Activated naive CD4-positive, alpha-beta T cell treated with anti-CD3 and anti-CD28 coated beads for 36 hours (primary cell): ENCODE measurements at regions of chr1 and their contacts with region 1.

Region 1: GRCh38 chr1:15835741-15836510 is 11.6 kb upstream of the SPEN start:
- DNase-seq: peak; percentile 100
- H3K4me3 Mint-ChIP-seq: peak overlapping the region; percentile 86
- H3K27ac Mint-ChIP-seq: peak overlapping the region; percentile 95
- H3K4me1 Mint-ChIP-seq: peaks cover 27% of the 10 kb centered on the region
- H3K27me3 Mint-ChIP-seq: no peaks in the 10 kb centered on the region

Region 2: GRCh38 chr1:15246960-15247614 is 588.8 kb before region 1 on chr1 and contains the start of gene FHAD1:
- CTCF ChIA-PET with region 1: no interaction called
- intact Hi-C with region 1: loop called (anchors 10 kb)
- DNase-seq: peak; percentile 48
- H3K4me3 Mint-ChIP-seq: peak within 1 kb of the TSS; percentile 51
- H3K27ac Mint-ChIP-seq: peak within 1 kb of the TSS; percentile 59
- H3K4me1 Mint-ChIP-seq: peaks cover 66% of the 10 kb centered on the region
- H3K27me3 Mint-ChIP-seq: peaks cover 50% of the 10 kb centered on the region
- total RNA-seq, gene FHAD1: 0.45 TPM in 1 of 2 experiments, not detected in the other

Region 3: DNA sequence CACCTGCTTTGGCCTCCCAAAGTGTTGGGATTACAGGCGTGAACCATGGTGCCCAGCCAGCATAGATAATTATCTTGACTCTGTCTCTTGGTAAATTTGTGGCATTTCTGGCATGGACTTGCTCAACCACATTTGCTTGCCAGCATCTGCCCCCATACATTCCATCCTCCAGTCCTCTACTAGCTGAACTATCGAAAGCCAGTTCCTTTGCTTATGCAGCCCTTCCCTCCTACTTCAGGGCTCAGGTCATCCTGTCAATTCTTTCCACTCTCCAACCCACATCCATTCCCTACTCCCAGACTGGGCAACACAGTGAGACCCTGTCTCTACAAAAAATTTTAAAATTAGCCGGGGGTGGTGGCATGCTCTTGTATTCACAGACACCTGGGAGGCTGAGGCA is 15.4 kb before region 1 on chr1:
- CTCF ChIA-PET with region 1: interaction called, 18 read pairs
- intact Hi-C with region 1: no loop called
- DNase-seq: no peak
- H3K4me3 Mint-ChIP-seq: no peak overlapping the region
- H3K27ac Mint-ChIP-seq: no peak overlapping the region
- H3K4me1 Mint-ChIP-seq: peaks cover 5% of the 10 kb centered on the region
- H3K27me3 Mint-ChIP-seq: no peaks in the 10 kb centered on the region

Region 4: GRCh38 chr1:15870421-15870820 is 34.5 kb after region 1 on chr1:
- CTCF ChIA-PET with region 1: no interaction called
- intact Hi-C with region 1: loop called (anchors 5 kb)
- DNase-seq: no peak
- H3K4me3 Mint-ChIP-seq: no peak overlapping the region
- H3K27ac Mint-ChIP-seq: no peak overlapping the region
- H3K4me1 Mint-ChIP-seq: peaks cover 66% of the 10 kb centered on the region
- H3K27me3 Mint-ChIP-seq: no peaks in the 10 kb centered on the region

Region 5: GRCh38 chr1:15918962-15919715 is 83.2 kb after region 1 on chr1:
- CTCF ChIA-PET with region 1: interaction called, 5 read pairs
- intact Hi-C with region 1: loop called (anchors 5 kb)
- DNase-seq: peak; percentile 82
- H3K4me3 Mint-ChIP-seq: no peak overlapping the region
- H3K27ac Mint-ChIP-seq: no peak overlapping the region
- H3K4me1 Mint-ChIP-seq: peaks cover 43% of the 10 kb centered on the region
- H3K27me3 Mint-ChIP-seq: no peaks in the 10 kb centered on the region

Region 6: GRCh38 chr1:16167331-16168143 is 331.6 kb after region 1 on chr1:
- CTCF ChIA-PET with region 1: no interaction called
- intact Hi-C with region 1: loop called (anchors 10 kb)
- DNase-seq: peak; percentile 76
- H3K4me3 Mint-ChIP-seq: peak overlapping the region; percentile 60
- H3K27ac Mint-ChIP-seq: no peak overlapping the region
- H3K4me1 Mint-ChIP-seq: peaks cover 50% of the 10 kb centered on the region
- H3K27me3 Mint-ChIP-seq: no peaks in the 10 kb centered on the region

Region 7: DNA sequence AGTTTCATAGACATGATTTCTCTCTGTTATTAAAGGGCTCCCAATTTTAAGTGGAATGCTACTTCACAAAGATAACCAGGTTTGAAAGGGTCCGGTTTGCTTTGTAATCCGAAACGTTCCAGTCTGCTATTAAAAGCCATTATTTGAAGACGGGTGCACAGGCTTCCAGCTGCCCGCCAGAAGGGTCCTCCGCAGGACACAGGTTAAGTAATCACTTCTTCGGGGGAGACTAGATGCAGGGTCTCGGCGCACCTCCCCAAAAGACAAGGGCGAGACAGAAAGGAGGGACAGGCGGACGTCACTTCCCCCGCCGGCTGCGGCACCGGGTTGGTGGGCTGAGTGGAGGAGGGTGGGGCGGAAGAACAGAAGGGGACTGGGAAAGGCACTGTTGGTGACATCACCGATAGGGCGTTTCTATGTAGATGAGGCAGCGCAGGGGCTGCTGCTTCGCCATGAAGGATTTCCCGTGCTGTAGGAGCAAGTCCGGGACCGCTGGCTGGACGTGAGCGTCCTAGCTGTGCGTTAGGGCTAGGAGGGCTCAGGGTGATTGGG is 1068.7 kb after region 1 on chr1:
- CTCF ChIA-PET with region 1: no interaction called
- intact Hi-C with region 1: loop called (anchors 10 kb)
- DNase-seq: peak; percentile 100
- H3K4me3 Mint-ChIP-seq: no peak overlapping the region
- H3K27ac Mint-ChIP-seq: no peak overlapping the region
- H3K4me1 Mint-ChIP-seq: peaks cover 32% of the 10 kb centered on the region
- H3K27me3 Mint-ChIP-seq: no peaks in the 10 kb centered on the region